ENCODE measurements at regions of chr2 and their contacts with region 1.

Region 1: GRCh38 chr2:85852937-85853498 is 35.8 kb downstream of the ST3GAL5 start:
- DNase-seq: peak; percentile 46 to 86 (median 74)
- ATAC-seq: peak; percentile 83 to 86 (median 85)
- H3K4me3 ChIP-seq: peak overlapping the region; percentile 41 to 60
- H3K4me3 Mint-ChIP-seq: peak overlapping the region; percentile 69 to 81 (median 77)
- H3K27ac ChIP-seq: peak overlapping the region; percentile 97
- H3K27ac Mint-ChIP-seq: peak overlapping the region; percentile 99 to 100
- H3K4me1 ChIP-seq: peaks cover 35 to 64% of the 10 kb centered on the region in 2 experiments
- H3K4me1 Mint-ChIP-seq: peaks cover 67 to 86% (median 76%) of the 10 kb centered on the region in 3 donors
- H3K27me3 ChIP-seq: no peaks in the 10 kb centered on the region
- H3K27me3 Mint-ChIP-seq: no peaks in the 10 kb centered on the region

Region 2: DNA sequence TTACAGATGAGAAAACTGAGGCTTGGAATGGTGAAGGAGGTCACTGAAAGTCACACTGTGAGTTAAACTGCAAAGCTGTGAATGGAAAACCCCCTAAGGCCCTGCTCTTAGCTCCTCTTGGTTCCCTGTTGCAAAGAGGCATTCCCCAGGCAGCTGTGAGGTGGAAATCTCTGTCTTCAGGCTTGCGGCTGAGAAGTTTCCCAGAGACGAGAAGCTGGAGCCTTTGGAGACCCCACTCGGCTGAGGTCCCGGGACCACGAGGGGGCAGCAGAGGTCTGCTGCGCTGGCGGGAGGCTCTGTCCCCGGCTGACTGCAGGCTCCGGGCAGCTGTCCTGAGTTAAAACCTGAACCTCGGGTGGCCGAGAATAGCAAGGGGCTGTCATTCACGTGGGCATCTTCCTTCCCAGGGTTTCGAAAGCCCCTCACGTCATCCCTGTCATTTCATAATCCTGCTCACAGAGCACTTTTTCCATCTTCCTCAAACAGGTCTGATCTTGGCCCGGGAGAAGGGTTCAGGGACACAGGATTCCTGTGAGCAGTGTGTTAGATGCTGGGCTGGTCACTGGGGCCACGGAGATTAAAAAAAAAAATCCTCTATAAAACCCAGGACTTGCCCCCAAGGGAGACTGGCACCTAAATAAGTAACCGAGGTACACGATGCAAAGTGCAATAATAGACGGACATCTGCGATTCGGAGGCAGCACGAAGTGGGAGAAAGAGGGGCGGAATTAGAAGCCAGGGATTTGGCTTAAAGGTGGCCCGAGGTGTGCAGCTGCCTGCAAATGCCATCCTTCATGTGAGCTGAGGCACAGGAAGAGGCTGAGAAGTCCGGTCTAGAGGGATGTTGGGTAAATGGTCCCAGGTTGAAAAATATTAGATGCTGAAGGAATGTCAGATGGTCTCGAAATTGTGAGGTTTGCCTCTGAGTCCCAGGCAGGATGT is 123.9 kb before region 1 on chr2:
- CTCF ChIA-PET with region 1: no interaction called
- POLR2A ChIA-PET with region 1: no interaction called
- DNase-seq: peak; percentile 28 to 77 (median 61)
- ATAC-seq: peak; percentile 76 to 86 (median 81)
- H3K4me3 ChIP-seq: no peak overlapping the region
- H3K4me3 Mint-ChIP-seq: no peak overlapping the region
- H3K27ac ChIP-seq: no peak overlapping the region
- H3K27ac Mint-ChIP-seq: peak overlapping the region in 1 of 2 donors; percentile 24
- H3K4me1 ChIP-seq: peaks cover 0 to 6% of the 10 kb centered on the region in 2 experiments
- H3K4me1 Mint-ChIP-seq: peaks cover 0 to 6% (median 2%) of the 10 kb centered on the region in 3 donors
- H3K27me3 ChIP-seq: peaks cover 0 to 19% of the 10 kb centered on the region in 2 experiments
- H3K27me3 Mint-ChIP-seq: peaks cover 0 to 21% of the 10 kb centered on the region in 2 donors

Region 3: GRCh38 chr2:85920810-85921545 is 68.0 kb after region 1 on chr2:
- CTCF ChIA-PET with region 1: no interaction called
- POLR2A ChIA-PET with region 1: no interaction called
- DNase-seq: no peak
- ATAC-seq: no peak
- H3K4me3 ChIP-seq: no peak overlapping the region
- H3K4me3 Mint-ChIP-seq: no peak overlapping the region
- H3K27ac ChIP-seq: no peak overlapping the region
- H3K27ac Mint-ChIP-seq: no peak overlapping the region
- H3K4me1 ChIP-seq: no peaks in the 10 kb centered on the region
- H3K4me1 Mint-ChIP-seq: peaks cover 6 to 8% (median 7%) of the 10 kb centered on the region in 3 donors
- H3K27me3 ChIP-seq: peaks cover 0 to 2% of the 10 kb centered on the region in 2 experiments
- H3K27me3 Mint-ChIP-seq: peaks cover 0 to 3% of the 10 kb centered on the region in 2 donors

Region 4: DNA sequence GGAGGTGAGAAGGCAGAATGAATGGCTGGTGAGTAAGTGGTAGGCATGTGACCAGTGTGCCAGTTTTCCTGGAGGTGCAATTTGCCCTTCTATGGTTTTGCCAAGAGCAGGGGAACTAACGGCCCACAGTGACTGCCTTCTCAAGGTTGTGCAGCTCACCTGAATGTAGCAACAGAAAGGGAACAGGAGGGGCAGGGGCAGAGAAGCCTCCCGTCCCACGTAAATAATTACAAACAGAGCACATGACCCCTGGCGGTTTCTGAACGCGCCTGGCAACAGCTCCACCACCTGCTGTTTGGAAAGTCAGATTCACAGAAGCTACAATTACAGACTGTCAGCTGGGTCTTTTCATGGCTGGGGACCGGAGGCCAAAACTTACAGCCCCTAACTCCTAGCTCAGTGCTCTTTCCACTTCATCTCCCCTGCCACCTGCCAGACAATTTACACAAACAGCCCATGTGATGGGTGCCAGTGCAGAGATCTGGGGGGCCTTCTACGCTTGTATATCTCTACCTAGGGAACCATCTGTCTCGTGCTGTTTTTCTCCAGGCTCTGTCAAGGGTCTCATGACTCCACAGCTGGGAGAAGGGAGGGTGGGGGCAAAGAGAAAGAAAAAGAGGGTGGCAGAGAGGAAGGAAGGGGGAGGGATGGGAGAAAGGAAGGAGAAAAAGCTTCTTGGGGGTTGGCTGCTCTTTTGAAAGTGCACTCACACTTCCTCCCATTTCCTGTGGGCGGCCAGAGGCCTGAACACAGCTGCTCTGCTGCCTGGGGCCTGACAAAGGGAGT is 183.1 kb after region 1 on chr2:
- CTCF ChIA-PET with region 1: interaction called in 1 of 2 experiments, 4 read pairs
- POLR2A ChIA-PET with region 1: interaction called, 7 to 13 read pairs
- DNase-seq: peak; percentile 38 to 88 (median 75)
- ATAC-seq: peak; percentile 52 to 57 (median 54)
- H3K4me3 ChIP-seq: peak overlapping the region; percentile 27 to 30
- H3K4me3 Mint-ChIP-seq: peak overlapping the region; percentile 67 to 78 (median 74)
- H3K27ac ChIP-seq: peak overlapping the region; percentile 96
- H3K27ac Mint-ChIP-seq: peak overlapping the region; percentile 99
- H3K4me1 ChIP-seq: peaks cover 65 to 84% of the 10 kb centered on the region in 2 experiments
- H3K4me1 Mint-ChIP-seq: peaks cover 85 to 96% (median 89%) of the 10 kb centered on the region in 3 donors
- H3K27me3 ChIP-seq: no peaks in the 10 kb centered on the region
- H3K27me3 Mint-ChIP-seq: no peaks in the 10 kb centered on the region

Region 5: GRCh38 chr2:86079981-86080911 is 227.2 kb after region 1 on chr2:
- CTCF ChIA-PET with region 1: interaction called in 1 of 2 experiments, 11 read pairs
- POLR2A ChIA-PET with region 1: no interaction called
- DNase-seq: peak; percentile 66 to 90 (median 83)
- ATAC-seq: peak; percentile 77 to 88 (median 84)
- H3K4me3 ChIP-seq: no peak overlapping the region
- H3K4me3 Mint-ChIP-seq: peak overlapping the region in 1 of 3 donors; percentile 10
- H3K27ac ChIP-seq: peak overlapping the region; percentile 82
- H3K27ac Mint-ChIP-seq: peak overlapping the region; percentile 87 to 88
- H3K4me1 ChIP-seq: peaks cover 0 to 34% of the 10 kb centered on the region in 2 experiments
- H3K4me1 Mint-ChIP-seq: peaks cover 24 to 36% (median 33%) of the 10 kb centered on the region in 3 donors
- H3K27me3 ChIP-seq: no peaks in the 10 kb centered on the region
- H3K27me3 Mint-ChIP-seq: no peaks in the 10 kb centered on the region